Left lung (tissue), 14 donors: ENCODE measurements at regions of chr1 and their contacts with region 1.

Region 1: GRCh38 chr1:37434292-37434907 is 40.0 kb upstream of the ZC3H12A start:
- DNase-seq: peak; percentile 28 to 93 (median 55)
- ATAC-seq: peak; percentile 93
- H3K4me3 ChIP-seq: no peak overlapping the region
- H3K27ac ChIP-seq: no peak overlapping the region
- H3K4me1 ChIP-seq: no peaks in the 10 kb centered on the region
- H3K27me3 ChIP-seq: peaks cover 0 to 48% of the 10 kb centered on the region in 2 donors
- CTCF ChIP-seq: peak; percentile 93 to 94

Region 2: DNA sequence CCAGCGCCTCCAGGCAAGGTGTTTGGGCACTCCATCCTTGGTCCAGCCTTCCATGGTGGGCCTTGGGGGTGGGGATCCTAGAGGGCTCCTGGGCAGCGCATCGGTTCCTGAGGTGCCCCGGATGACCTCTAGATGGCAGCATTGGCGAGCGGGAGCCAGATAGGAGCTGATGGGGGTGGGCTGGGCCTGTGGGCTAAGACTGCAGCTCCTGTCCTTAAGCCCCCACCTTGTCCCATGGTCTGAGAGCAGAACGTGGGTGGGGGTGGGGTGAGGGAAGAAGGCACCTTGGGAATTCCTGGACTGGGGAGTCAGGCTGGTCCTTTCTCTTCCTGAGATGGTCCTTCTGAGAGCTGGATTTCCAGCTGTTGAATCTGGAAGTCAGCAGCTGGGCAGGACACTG is 858.3 kb before region 1 on chr1:
- intact Hi-C with region 1: loop called in 1 of 2 experiments (anchors 10 kb)
- DNase-seq: peak; percentile 45 to 84 (median 68)
- ATAC-seq: peak; percentile 87
- H3K4me3 ChIP-seq: no peak overlapping the region
- H3K27ac ChIP-seq: no peak overlapping the region
- H3K4me1 ChIP-seq: no peaks in the 10 kb centered on the region
- H3K27me3 ChIP-seq: peaks cover 0 to 47% of the 10 kb centered on the region in 2 donors
- CTCF ChIP-seq: peak; percentile 72 to 80

Region 3: DNA sequence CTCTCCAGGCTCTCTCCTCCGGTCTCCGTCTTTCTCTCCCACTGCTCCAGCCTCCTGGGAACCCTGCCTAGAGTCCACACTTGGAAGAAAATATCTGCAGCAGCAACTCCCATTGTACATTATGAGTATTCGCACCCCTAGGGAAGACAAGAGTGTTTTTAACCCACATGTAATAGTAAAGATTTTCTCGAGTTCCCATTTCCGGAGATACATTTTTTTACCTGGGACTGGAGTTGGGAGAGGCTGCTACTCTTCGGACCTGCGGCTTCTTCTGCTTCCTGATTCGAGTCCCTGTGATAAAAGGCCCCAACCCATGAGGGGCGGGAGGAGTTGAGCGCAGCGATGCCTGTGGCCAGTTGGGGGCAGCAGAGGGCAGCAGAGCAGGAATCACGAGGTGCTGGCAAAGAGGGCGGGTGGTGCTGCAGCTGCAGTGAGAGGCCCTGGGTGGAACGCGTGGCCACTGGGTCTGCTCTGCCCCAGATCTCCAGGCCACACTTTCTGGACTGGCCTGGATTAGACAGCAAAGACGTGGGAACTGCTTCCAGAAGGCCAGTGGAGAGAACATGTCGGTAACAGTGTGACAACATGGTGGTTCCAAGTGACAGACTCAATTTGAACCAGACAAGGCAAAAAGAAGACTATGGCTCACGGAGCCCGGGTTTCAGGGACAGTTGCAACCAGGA is 730.7 kb before region 1 on chr1:
- intact Hi-C with region 1: loop called in 1 of 2 experiments (anchors 10 kb)
- DNase-seq: peak; percentile 55 to 89 (median 69)
- ATAC-seq: peak; percentile 99
- H3K4me3 ChIP-seq: no peak overlapping the region
- H3K27ac ChIP-seq: no peak overlapping the region
- H3K4me1 ChIP-seq: no peaks in the 10 kb centered on the region
- H3K27me3 ChIP-seq: peaks cover 0 to 66% of the 10 kb centered on the region in 2 donors
- CTCF ChIP-seq: peak; percentile 82 to 88